ENCODE measurements at regions of chr14 and their contacts with region 1.

Region 1: DNA sequence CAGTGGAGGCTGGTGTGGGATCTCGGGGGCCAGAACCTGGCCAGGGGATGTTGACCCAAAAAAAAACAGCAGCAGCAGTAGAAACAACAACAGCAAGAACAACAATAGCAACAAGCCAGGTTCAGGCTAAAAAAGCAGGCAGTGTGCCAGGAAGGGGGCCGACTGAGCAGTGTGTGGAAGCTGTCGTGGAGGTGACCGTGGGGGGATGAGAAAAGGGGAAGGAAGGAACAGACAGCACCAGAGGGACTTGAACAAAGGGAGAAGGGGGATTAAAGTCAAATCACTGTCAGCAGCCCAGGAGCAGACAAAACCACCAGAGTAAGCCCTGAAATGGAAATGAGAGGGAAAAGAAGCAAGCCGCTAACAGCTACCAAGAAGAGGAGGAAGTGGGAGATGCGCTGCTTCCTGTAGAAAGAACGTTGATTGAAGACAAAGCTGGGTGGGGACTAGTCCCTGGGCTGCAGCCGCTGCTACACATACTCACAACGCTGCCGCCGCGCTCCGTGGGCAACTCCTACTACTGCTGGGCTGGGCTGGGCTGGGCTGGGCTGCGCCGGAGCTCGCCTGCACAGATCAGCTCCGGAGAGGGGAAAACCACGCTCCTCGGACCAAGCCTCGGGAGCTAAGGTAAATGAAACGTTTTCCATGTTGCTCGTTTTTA is at the start of gene GNG2:
- H3K4me3 Mint-ChIP-seq: peak within 1 kb of the TSS; percentile 83
- H3K27ac Mint-ChIP-seq: peak within 1 kb of the TSS; percentile 79
- H3K4me1 Mint-ChIP-seq: peaks cover 68% of the 10 kb centered on the region
- H3K27me3 Mint-ChIP-seq: no peaks in the 10 kb centered on the region

Region 2: GRCh38 chr14:51651388-51652167 is 208.7 kb before region 1 on chr14 and contains the start of gene FRMD6:
- intact Hi-C with region 1: loop called (anchors 10 kb)
- H3K4me3 Mint-ChIP-seq: peak within 1 kb of the TSS; percentile 87
- H3K27ac Mint-ChIP-seq: peak within 1 kb of the TSS; percentile 92
- H3K4me1 Mint-ChIP-seq: peaks cover 23% of the 10 kb centered on the region
- H3K27me3 Mint-ChIP-seq: peaks cover 24% of the 10 kb centered on the region

Region 3: DNA sequence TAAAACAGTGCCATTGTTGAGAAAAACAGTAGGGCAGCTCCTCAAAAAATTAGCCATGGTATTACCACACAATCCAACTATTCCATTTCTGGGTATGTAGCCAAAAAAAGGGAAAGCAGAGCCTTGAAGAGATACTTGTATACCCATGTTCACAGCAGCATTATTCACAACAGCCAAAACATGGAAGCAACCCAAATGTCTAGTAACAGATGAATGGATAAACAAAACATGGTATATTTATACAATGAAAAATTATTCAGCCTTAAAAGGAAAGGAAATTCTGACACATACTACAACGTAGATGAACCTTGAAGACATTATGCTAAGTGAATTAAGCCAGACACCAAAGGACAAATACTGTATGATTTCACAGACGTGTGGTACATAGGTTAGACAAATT is 67.5 kb before region 1 on chr14:
- intact Hi-C with region 1: loop called (anchors 5 kb)
- H3K4me3 Mint-ChIP-seq: no peak overlapping the region
- H3K27ac Mint-ChIP-seq: no peak overlapping the region
- H3K4me1 Mint-ChIP-seq: peaks cover 40% of the 10 kb centered on the region
- H3K27me3 Mint-ChIP-seq: no peaks in the 10 kb centered on the region

Region 4: GRCh38 chr14:51846631-51847488 is 13.4 kb before region 1 on chr14:
- intact Hi-C with region 1: loop called (anchors 2 kb)
- H3K4me3 Mint-ChIP-seq: peak overlapping the region; percentile 75
- H3K27ac Mint-ChIP-seq: peak overlapping the region; percentile 93
- H3K4me1 Mint-ChIP-seq: peaks cover 62% of the 10 kb centered on the region
- H3K27me3 Mint-ChIP-seq: no peaks in the 10 kb centered on the region

Region 5: DNA sequence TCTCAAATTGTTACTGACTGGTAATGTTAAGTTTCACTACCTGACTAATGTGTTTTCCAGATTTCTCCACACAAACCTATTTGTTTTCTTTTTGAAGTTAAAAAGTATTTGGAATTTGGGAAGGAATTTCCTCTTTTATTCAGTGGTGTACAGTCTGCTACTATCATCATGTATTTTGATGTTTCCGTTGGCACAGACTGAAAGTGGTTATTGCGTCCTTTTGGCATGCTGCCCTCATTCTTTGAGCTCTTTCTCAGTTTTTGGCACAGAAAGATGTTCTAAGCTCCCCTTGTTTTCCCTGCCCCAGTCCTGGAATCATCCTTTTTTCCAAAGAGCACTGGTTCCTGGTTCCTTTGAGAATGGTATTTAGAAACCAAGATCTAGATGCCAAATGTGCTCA is 97.7 kb after region 1 on chr14:
- intact Hi-C with region 1: no loop called
- H3K4me3 Mint-ChIP-seq: no peak overlapping the region
- H3K27ac Mint-ChIP-seq: no peak overlapping the region
- H3K4me1 Mint-ChIP-seq: peaks cover 12% of the 10 kb centered on the region
- H3K27me3 Mint-ChIP-seq: no peaks in the 10 kb centered on the region

Region 6: GRCh38 chr14:52706724-52707706 is 846.7 kb after region 1 on chr14 and contains the start of gene PSMC6:
- intact Hi-C with region 1: no loop called
- H3K4me3 Mint-ChIP-seq: peak within 1 kb of the TSS; percentile 88
- H3K27ac Mint-ChIP-seq: peak within 1 kb of the TSS; percentile 84
- H3K4me1 Mint-ChIP-seq: peaks cover 26% of the 10 kb centered on the region
- H3K27me3 Mint-ChIP-seq: no peaks in the 10 kb centered on the region

Measured in dendritic cell treated with granulocyte-macrophage colony-stimulating factor and Interleukin-4, amounts not matched to agents 40 ng/mL and 50 ng/mL, for 4 days (primary cell).